CD14-positive monocyte (primary cell): ENCODE measurements at regions of chrX and their contacts with region 1.

Region 1: DNA sequence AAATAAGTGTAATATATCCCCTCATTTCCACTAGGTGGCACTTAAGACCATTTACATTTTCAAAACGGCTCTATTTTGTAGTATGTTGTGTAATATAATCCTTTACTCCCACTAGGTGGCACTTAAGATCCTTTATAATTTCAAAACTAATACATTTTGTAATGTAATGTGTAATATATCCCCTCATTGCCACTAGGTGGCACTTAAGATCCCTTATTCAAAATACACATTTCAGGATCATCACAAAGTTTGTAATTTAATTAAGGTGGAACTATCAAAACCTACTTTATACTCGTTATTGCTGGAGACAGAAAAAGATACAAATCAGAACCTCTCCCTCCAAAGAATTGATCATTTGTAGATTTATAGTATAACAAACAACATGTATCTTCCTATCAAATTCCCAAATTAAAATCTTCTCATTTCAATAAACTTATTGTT is 132.5 kb downstream of the ARHGAP6 start:
- DNase-seq: peak; percentile 53 to 79 (median 66)
- H3K4me3 ChIP-seq: no peak overlapping the region
- H3K4me3 Mint-ChIP-seq: no peak overlapping the region
- H3K27ac ChIP-seq: no peak overlapping the region
- H3K27ac Mint-ChIP-seq: no peak overlapping the region
- H3K4me1 ChIP-seq: no peaks in the 10 kb centered on the region
- H3K4me1 Mint-ChIP-seq: no peaks in the 10 kb centered on the region
- H3K27me3 ChIP-seq: no peaks in the 10 kb centered on the region
- H3K27me3 Mint-ChIP-seq: peaks cover 0 to 2% (median 0%) of the 10 kb centered on the region in 3 donors
- CTCF ChIP-seq: peak; percentile 87

Region 2: GRCh38 chrX:11143931-11144678 is 389.1 kb before region 1 on chrX:
- intact Hi-C with region 1: loop called in 1 of 2 experiments (anchors 10 kb)
- DNase-seq: peak; percentile 53 to 63 (median 63)
- H3K4me3 ChIP-seq: no peak overlapping the region
- H3K4me3 Mint-ChIP-seq: no peak overlapping the region
- H3K27ac ChIP-seq: no peak overlapping the region
- H3K27ac Mint-ChIP-seq: no peak overlapping the region
- H3K4me1 ChIP-seq: no peaks in the 10 kb centered on the region
- H3K4me1 Mint-ChIP-seq: peaks cover 2% of the 10 kb centered on the region
- H3K27me3 ChIP-seq: peaks cover 0 to 5% of the 10 kb centered on the region in 2 donors
- H3K27me3 Mint-ChIP-seq: peaks cover 0 to 9% (median 2%) of the 10 kb centered on the region in 3 donors
- CTCF ChIP-seq: peak; percentile 56

Region 3: GRCh38 chrX:11770320-11770719 is 237.1 kb after region 1 on chrX:
- intact Hi-C with region 1: loop called (anchors 5 kb)
- DNase-seq: peak; percentile 49 to 66 (median 62)
- H3K4me3 ChIP-seq: no peak overlapping the region
- H3K4me3 Mint-ChIP-seq: no peak overlapping the region
- H3K27ac ChIP-seq: no peak overlapping the region
- H3K27ac Mint-ChIP-seq: peak overlapping the region in 3 of 7 donors; percentile 54 to 69 (median 64)
- H3K4me1 ChIP-seq: peaks cover 0 to 6% of the 10 kb centered on the region in 2 donors
- H3K4me1 Mint-ChIP-seq: peaks cover 15% of the 10 kb centered on the region
- H3K27me3 ChIP-seq: no peaks in the 10 kb centered on the region
- H3K27me3 Mint-ChIP-seq: peaks cover 0 to 3% (median 0%) of the 10 kb centered on the region in 3 donors
- CTCF ChIP-seq: peak; percentile 79